ENCODE measurements at regions of chr12 and their contacts with region 1.

Region 1: DNA sequence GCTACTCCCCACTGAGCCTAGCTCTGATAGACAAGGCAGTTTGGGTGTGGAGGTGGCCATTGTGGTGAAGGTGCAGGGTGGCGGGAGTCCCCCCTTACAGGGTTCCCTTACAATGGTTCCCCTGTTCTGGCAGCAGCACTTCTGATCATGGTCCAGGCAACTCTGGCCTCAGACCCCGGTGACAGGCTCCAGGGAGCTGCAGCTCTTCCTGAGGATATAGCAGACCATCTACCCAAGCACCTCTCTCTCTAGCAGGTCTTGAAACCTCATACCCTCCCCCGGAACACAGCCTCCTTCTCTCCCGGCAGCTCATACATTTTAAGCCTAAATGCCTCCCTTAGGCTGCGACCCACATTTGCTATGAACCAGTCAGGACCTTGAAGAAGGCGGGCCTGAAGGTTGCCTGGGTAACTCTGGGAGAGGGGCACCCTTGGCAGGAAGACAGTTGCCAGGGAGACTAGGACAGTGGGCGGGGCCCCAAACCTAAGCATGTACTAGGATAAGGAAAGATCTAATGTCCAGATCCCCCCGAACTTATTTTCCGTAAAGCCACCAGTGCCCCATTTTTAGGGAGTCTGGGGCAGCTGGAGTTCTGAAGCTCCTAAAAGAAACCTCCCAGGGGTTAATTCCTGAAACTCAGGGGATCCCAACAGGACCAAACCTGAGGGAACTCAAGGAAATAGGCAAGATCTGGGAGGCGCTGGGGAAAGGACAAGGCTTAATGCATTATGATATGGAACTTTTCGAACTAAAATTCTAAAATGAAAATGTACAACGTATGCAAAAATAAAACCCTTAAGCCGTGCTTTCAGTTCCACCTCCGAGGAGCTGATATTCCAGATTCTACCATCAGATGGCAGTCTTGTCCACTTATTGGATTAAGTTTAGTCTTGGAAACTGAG is 4.5 kb upstream of the GDF11 start:
- DNase-seq: peak; percentile 90
- H3K4me3 ChIP-seq: peak overlapping the region; percentile 57 to 91 (median 83)
- H3K27ac ChIP-seq: no peak overlapping the region
- H3K4me1 ChIP-seq: peaks cover 14% of the 10 kb centered on the region
- H3K27me3 ChIP-seq: no peaks in the 10 kb centered on the region
- CTCF ChIP-seq: peak; percentile 54 to 79
- POLR2A ChIP-seq: no peak

Region 2: GRCh38 chr12:55681142-55682077 is 57.0 kb before region 1 on chr12:
- CTCF ChIA-PET with region 1: interaction called, 5 read pairs
- POLR2A ChIA-PET with region 1: no interaction called
- dilution Hi-C with region 1: no loop called
- intact Hi-C with region 1: loop called (anchors 1 kb)
- DNase-seq: peak; percentile 44
- H3K4me3 ChIP-seq: no peak overlapping the region
- H3K27ac ChIP-seq: no peak overlapping the region
- H3K4me1 ChIP-seq: no peaks in the 10 kb centered on the region
- H3K27me3 ChIP-seq: peaks cover 0 to 5% of the 10 kb centered on the region in 2 experiments
- CTCF ChIP-seq: peak; percentile 14 to 43
- POLR2A ChIP-seq: no peak

Region 3: DNA sequence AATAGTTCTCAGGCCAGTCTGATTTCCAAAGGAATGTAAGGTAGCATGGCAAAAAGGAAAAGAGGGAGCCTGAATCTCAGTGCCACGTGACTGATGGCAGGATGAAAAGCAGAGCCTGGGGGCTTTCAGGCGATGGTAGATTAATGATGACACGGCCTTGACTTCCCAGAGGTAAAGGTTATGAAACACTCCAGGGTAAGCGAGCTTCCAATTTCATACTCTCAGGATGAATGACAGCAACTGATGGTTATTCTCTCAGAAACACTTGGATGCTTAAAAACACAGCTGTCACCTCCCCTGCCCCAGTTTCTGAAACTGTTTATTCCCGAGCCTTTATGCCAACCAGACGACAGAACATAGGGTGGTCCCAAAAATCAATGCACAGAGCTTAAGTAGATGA is 33.4 kb after region 1 on chr12:
- CTCF ChIA-PET with region 1: interaction called, 12 read pairs
- POLR2A ChIA-PET with region 1: interaction called, 5 read pairs
- dilution Hi-C with region 1: no loop called
- intact Hi-C with region 1: no loop called
- DNase-seq: no peak
- H3K4me3 ChIP-seq: no peak overlapping the region
- H3K27ac ChIP-seq: no peak overlapping the region
- H3K4me1 ChIP-seq: no peaks in the 10 kb centered on the region
- H3K27me3 ChIP-seq: no peaks in the 10 kb centered on the region
- CTCF ChIP-seq: no peak
- POLR2A ChIP-seq: no peak

Region 4: DNA sequence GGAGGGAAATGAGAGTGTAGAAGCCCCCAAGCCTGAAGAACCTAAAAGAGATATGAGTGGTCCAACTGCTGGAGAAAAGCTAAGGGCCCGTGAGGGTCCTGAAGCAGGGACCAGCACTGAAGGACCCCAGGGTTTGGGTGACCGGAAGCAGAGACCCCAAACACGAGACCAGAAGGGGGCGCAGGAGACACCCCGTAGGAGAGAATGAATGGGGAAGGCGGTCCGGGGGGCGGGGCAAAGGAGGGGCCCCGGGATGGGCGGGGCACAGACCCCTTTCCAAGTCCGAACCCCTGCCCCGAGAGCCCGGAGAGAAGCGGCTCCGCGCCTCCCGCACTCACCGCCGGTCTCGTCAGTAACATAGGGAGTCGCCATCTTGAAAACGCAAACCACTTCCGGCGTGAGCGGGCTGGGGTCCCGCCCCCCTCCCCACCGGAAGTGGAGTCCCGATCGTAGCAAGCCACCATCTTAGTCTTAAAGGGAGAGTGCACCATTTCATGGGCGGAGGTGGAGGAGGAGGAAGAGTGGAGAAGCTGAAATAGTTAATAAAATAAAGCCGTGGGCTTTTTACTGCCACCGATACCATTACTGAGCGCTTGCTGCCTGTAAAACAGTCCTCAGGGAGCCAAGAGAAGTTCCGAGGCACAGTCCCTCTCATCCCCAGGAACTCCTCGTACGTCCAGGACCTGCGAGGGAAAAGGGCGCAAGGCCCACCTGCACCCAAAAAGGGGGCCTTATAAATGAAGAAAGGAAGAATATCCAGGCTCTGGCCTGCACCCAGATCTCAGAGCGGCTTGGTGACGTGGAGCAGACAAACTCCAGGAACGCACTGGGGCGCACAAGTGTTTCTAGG is 188.6 kb after region 1 on chr12:
- CTCF ChIA-PET with region 1: interaction called, 17 read pairs
- POLR2A ChIA-PET with region 1: no interaction called
- dilution Hi-C with region 1: no loop called
- intact Hi-C with region 1: no loop called
- DNase-seq: peak; percentile 95
- H3K4me3 ChIP-seq: peak overlapping the region; percentile 55 to 98 (median 81)
- H3K27ac ChIP-seq: peak overlapping the region; percentile 40
- H3K4me1 ChIP-seq: peaks cover 28% of the 10 kb centered on the region
- H3K27me3 ChIP-seq: no peaks in the 10 kb centered on the region
- CTCF ChIP-seq: peak; percentile 69 to 74
- POLR2A ChIP-seq: peak; percentile 58

Region 5: GRCh38 chr12:55996715-55997534 is 258.6 kb after region 1 on chr12 and contains the start of gene SUOX:
- CTCF ChIA-PET with region 1: interaction called, 12 read pairs
- POLR2A ChIA-PET with region 1: no interaction called
- dilution Hi-C with region 1: no loop called
- intact Hi-C with region 1: no loop called
- DNase-seq: peak; percentile 98
- H3K4me3 ChIP-seq: peak within 1 kb of the TSS; percentile 17 to 73 (median 40)
- H3K27ac ChIP-seq: no peak within 1 kb of the TSS
- H3K4me1 ChIP-seq: peaks cover 10% of the 10 kb centered on the region
- H3K27me3 ChIP-seq: no peaks in the 10 kb centered on the region
- CTCF ChIP-seq: no peak
- POLR2A ChIP-seq: peak; percentile 85
- total RNA-seq, gene SUOX: 24.3 and 24.8 TPM in 2 replicates

Region 6: GRCh38 chr12:56104109-56104814 is 365.9 kb after region 1 on chr12 and contains the start of gene PA2G4:
- CTCF ChIA-PET with region 1: interaction called, 21 read pairs
- POLR2A ChIA-PET with region 1: no interaction called
- dilution Hi-C with region 1: no loop called
- intact Hi-C with region 1: loop called (anchors 2 kb)
- DNase-seq: peak; percentile 99
- H3K4me3 ChIP-seq: peak within 1 kb of the TSS; percentile 49 to 85 (median 68)
- H3K27ac ChIP-seq: peak within 1 kb of the TSS; percentile 60
- H3K4me1 ChIP-seq: peaks cover 25% of the 10 kb centered on the region
- H3K27me3 ChIP-seq: peaks cover 0 to 6% of the 10 kb centered on the region in 2 experiments
- CTCF ChIP-seq: no peak
- POLR2A ChIP-seq: peak; percentile 96
- total RNA-seq, gene PA2G4: 170 and 188 TPM in 2 replicates

Region 7: GRCh38 chr12:56636675-56637540 is 898.5 kb after region 1 on chr12:
- CTCF ChIA-PET with region 1: no interaction called
- POLR2A ChIA-PET with region 1: no interaction called
- dilution Hi-C with region 1: no loop called
- intact Hi-C with region 1: loop called (anchors 2 kb)
- DNase-seq: peak; percentile 99
- H3K4me3 ChIP-seq: peak overlapping the region in 2 of 3 experiments; percentile 21 to 76
- H3K27ac ChIP-seq: peak overlapping the region; percentile 48
- H3K4me1 ChIP-seq: peaks cover 34% of the 10 kb centered on the region
- H3K27me3 ChIP-seq: no peaks in the 10 kb centered on the region
- CTCF ChIP-seq: peak; percentile 65 to 77
- POLR2A ChIP-seq: peak; percentile 78

Measured in endothelial cell of umbilical vein (primary cell).